ENCODE measurements at regions of chr1 and their contacts with region 1.

Region 1: DNA sequence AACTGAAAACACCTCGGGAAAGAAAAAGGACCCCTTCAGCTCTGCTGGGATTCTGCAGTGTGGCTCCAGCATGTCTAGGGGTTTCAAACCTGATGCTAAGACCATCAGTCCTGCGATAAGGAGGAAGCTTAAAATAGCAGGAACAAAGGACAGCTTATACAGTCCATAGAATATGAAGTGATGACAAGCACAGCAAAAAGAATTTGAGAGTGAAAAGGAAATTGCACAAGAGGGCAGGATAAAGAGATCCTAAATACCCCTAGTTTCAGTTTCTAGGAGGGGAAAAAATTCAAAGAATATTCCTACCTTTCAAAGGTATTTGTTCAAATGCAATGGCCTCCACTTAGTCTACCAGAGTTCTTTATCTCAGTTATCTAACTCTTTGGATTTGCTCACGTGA is 171.4 kb downstream of the TGFB2 start:
- DNase-seq: no peak
- H3K4me3 ChIP-seq: no peak overlapping the region
- H3K27me3 ChIP-seq: no peaks in the 10 kb centered on the region
- CTCF ChIP-seq: no peak

Region 2: DNA sequence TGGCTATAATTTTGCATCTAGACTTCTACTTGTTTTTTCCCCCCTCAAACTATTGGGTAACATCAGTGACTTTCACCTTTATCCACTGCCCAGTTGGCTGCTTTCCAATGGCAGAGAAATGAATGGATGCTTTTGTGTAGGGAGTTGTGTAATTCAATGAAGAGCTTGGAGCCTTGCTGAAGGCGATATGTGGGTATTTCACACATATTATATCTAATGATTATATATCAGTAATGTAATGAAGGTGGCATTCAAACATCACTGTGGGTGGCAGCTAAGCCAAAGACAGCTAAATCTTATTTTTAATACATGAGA is 90.2 kb before region 1 on chr1:
- CTCF ChIA-PET with region 1: no interaction called
- POLR2A ChIA-PET with region 1: no interaction called
- DNase-seq: no peak
- H3K4me3 ChIP-seq: no peak overlapping the region
- H3K27me3 ChIP-seq: no peaks in the 10 kb centered on the region
- CTCF ChIP-seq: no peak

Region 3: DNA sequence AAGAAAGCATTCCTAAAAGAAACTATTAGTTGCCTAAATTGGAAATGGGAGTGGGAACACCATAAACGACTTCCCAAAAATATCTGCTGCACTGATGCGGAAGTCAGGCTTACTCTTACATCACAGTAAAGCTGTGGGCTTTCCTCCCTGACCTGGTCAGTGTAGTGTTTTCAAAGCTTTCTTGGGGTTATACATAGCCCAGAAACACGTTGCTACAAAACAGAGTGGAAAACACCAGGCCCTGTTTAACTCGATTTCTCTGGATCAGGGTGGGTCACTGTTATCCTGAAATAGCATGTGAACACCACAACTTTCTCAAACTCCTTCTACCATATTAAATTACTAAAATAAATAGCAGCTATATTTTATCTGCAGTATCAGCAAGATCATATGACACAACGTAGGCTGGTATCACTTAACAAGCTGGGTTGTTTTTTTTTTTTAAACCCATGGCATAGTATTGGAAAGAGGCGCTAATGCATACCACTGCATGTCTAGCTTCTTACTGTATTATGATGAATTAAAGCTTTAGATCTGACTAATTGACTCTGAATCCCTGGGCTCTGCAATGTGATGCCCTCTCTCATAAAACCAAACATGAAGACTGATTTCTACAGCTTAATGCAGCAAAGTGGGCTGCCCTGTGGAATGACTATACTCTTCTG is 13.3 kb after region 1 on chr1:
- CTCF ChIA-PET with region 1: interaction called, 10 read pairs
- POLR2A ChIA-PET with region 1: no interaction called
- DNase-seq: no peak
- H3K4me3 ChIP-seq: no peak overlapping the region
- H3K27me3 ChIP-seq: no peaks in the 10 kb centered on the region
- CTCF ChIP-seq: no peak

Measured in BJ (cell line).